A673 (cell line): ENCODE measurements at regions of chr17 and their contacts with region 1.

Region 1: GRCh38 chr17:29608891-29609361 is 13.8 kb downstream of the CORO6 start:
- DNase-seq: no peak
- H3K4me3 ChIP-seq: no peak overlapping the region
- H3K27ac ChIP-seq: no peak overlapping the region
- H3K4me1 ChIP-seq: no peaks in the 10 kb centered on the region
- H3K27me3 ChIP-seq: no peaks in the 10 kb centered on the region
- CTCF ChIP-seq: no peak

Region 2: DNA sequence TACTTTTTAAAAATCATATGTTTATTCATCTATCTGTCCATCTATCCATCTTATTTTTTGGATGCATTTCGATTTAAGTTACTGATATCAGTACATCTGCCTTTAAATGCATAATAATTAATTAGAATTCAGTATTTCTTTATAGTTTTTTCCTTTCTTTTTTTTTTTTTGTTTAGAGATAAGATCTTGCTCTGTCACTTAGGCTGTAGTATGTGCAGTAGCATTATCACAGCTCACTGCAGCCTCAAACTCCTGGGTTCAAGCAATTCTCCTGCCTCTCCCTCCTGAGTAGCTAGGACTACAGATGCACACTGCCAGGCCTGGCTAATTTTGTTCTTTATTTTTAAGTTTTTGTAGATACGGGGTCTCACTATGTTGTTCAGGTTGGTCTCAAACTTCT is 187.7 kb after region 1 on chr17:
- CTCF ChIA-PET with region 1: no interaction called
- POLR2A ChIA-PET with region 1: interaction called, 13 read pairs
- intact Hi-C with region 1: no loop called
- DNase-seq: no peak
- H3K4me3 ChIP-seq: no peak overlapping the region
- H3K27ac ChIP-seq: no peak overlapping the region
- H3K4me1 ChIP-seq: peaks cover 19% of the 10 kb centered on the region
- H3K27me3 ChIP-seq: no peaks in the 10 kb centered on the region
- CTCF ChIP-seq: no peak